Caco-2 (cell line): ENCODE measurements at regions of chr22 and their contacts with region 1.

Region 1: DNA sequence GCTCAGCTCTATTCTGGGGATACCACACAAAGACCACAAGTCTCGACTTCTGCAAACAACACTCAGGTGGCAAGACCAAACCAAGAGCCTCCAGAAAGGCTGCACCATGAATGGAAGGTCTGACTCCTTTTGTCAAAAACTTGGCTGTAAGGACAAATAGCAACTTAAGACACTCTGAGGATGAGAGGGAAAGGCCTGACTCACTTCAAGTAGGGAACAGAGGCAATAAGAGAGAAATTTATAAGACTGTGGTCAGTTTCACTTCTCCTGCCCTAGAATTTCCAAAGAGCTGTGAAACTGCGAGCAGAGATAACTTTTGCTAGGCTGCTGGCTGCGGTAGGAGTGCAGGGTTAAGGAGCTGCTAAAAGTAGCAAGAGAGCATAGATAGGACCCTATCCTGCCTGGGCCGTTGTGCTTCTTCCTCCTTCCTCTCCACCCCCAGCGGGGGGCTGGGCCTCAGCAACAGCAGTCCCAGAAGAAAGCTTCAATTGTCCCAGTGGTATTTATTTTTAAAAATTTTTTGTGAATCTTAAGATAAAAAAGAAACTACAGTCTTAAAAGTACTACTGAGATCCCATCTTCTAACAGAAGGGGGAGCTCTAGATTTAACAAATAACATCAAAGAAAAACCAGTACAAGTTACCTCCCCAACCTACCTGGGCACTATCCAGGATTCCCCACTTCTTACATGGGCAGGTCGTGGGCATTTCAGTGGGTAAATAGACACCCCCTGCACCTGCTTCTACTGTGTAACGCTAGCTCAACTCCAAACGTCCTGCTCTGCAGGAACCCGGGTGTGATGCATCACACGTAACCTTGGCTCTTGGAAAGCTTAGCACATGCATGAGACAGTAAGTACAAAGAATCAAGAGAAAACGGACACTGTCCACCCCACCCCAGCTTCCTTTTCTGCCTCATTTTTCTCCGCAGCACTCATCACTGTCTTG is 66.4 kb downstream of the SGSM3 start:
- DNase-seq: peak in 1 of 2 experiments; percentile 40
- H3K4me3 ChIP-seq: no peak overlapping the region
- H3K4me3 Mint-ChIP-seq: no peak overlapping the region
- H3K27ac Mint-ChIP-seq: no peak overlapping the region
- H3K4me1 ChIP-seq: peaks cover 10% of the 10 kb centered on the region; the same call in 1 of the 2 replicates
- H3K4me1 Mint-ChIP-seq: no peaks in the 10 kb centered on the region
- H3K27me3 ChIP-seq: no peaks in the 10 kb centered on the region
- H3K27me3 Mint-ChIP-seq: no peaks in the 10 kb centered on the region
- CTCF ChIP-seq: peak; percentile 35 to 47

Region 2: GRCh38 chr22:40469181-40469580 is 32.4 kb after region 1 on chr22:
- CTCF ChIA-PET with region 1: no interaction called
- POLR2A ChIA-PET with region 1: no interaction called
- intact Hi-C with region 1: no loop called
- DNase-seq: no peak
- H3K4me3 ChIP-seq: no peak overlapping the region
- H3K4me3 Mint-ChIP-seq: no peak overlapping the region
- H3K27ac Mint-ChIP-seq: no peak overlapping the region
- H3K4me1 ChIP-seq: no peaks in the 10 kb centered on the region
- H3K4me1 Mint-ChIP-seq: no peaks in the 10 kb centered on the region
- H3K27me3 ChIP-seq: no peaks in the 10 kb centered on the region
- H3K27me3 Mint-ChIP-seq: no peaks in the 10 kb centered on the region
- CTCF ChIP-seq: no peak

Region 3: GRCh38 chr22:40487663-40488249 is 51.0 kb after region 1 on chr22:
- CTCF ChIA-PET with region 1: interaction called, 8 read pairs
- POLR2A ChIA-PET with region 1: no interaction called
- intact Hi-C with region 1: loop called (anchors 1 kb)
- DNase-seq: peak in 1 of 2 experiments; percentile 21
- H3K4me3 ChIP-seq: no peak overlapping the region
- H3K4me3 Mint-ChIP-seq: no peak overlapping the region
- H3K27ac Mint-ChIP-seq: no peak overlapping the region
- H3K4me1 ChIP-seq: peaks cover 5% of the 10 kb centered on the region; the same call in 1 of the 2 replicates
- H3K4me1 Mint-ChIP-seq: peaks cover 12% of the 10 kb centered on the region
- H3K27me3 ChIP-seq: no peaks in the 10 kb centered on the region
- H3K27me3 Mint-ChIP-seq: no peaks in the 10 kb centered on the region
- CTCF ChIP-seq: peak; percentile 50 to 65

Region 4: GRCh38 chr22:40645579-40646197 is 208.9 kb after region 1 on chr22:
- CTCF ChIA-PET with region 1: interaction called, 11 read pairs
- POLR2A ChIA-PET with region 1: interaction called, 3 read pairs
- intact Hi-C with region 1: loop called (anchors 1 kb)
- DNase-seq: no peak
- H3K4me3 ChIP-seq: no peak overlapping the region
- H3K4me3 Mint-ChIP-seq: no peak overlapping the region
- H3K27ac Mint-ChIP-seq: no peak overlapping the region
- H3K4me1 ChIP-seq: peaks cover 23% of the 10 kb centered on the region
- H3K4me1 Mint-ChIP-seq: peaks cover 21% of the 10 kb centered on the region
- H3K27me3 ChIP-seq: no peaks in the 10 kb centered on the region
- H3K27me3 Mint-ChIP-seq: no peaks in the 10 kb centered on the region
- CTCF ChIP-seq: no peak

Region 5: GRCh38 chr22:40651563-40652501 is 215.1 kb after region 1 on chr22:
- CTCF ChIA-PET with region 1: interaction called, 11 read pairs
- POLR2A ChIA-PET with region 1: interaction called, 3 read pairs
- intact Hi-C with region 1: no loop called
- DNase-seq: peak; percentile 93 to 94
- H3K4me3 ChIP-seq: peak overlapping the region; percentile 73
- H3K4me3 Mint-ChIP-seq: peak overlapping the region; percentile 86
- H3K27ac Mint-ChIP-seq: peak overlapping the region; percentile 98
- H3K4me1 ChIP-seq: peaks cover 13% of the 10 kb centered on the region
- H3K4me1 Mint-ChIP-seq: peaks cover 9% of the 10 kb centered on the region
- H3K27me3 ChIP-seq: no peaks in the 10 kb centered on the region
- H3K27me3 Mint-ChIP-seq: no peaks in the 10 kb centered on the region
- CTCF ChIP-seq: no peak